ENCODE measurements at regions of chr7 and their contacts with region 1.

Region 1: GRCh38 chr7:13240349-13240748 is 552.9 kb downstream of the ARL4A start:
- DNase-seq: no peak
- H3K4me3 ChIP-seq: no peak overlapping the region
- CTCF ChIP-seq: no peak
- POLR2A ChIP-seq: no peak

Region 2: GRCh38 chr7:13032576-13032975 is 207.8 kb before region 1 on chr7:
- intact Hi-C with region 1: loop called (anchors 5 kb)
- DNase-seq: no peak
- H3K4me3 ChIP-seq: no peak overlapping the region
- CTCF ChIP-seq: no peak
- POLR2A ChIP-seq: no peak

Measured in lower leg skin (tissue), 4 donors.